ENCODE measurements at regions of chr11 and their contacts with region 1.

Region 1: GRCh38 chr11:6298605-6299004 is 21.7 kb downstream of the CAVIN3 start:
- DNase-seq: peak in 2 of 3 donors; percentile 58 to 66
- ATAC-seq: peak; percentile 65 to 75
- H3K4me3 ChIP-seq: no peak overlapping the region
- H3K27ac ChIP-seq: no peak overlapping the region
- H3K4me1 ChIP-seq: no peaks in the 10 kb centered on the region
- H3K27me3 ChIP-seq: no peaks in the 10 kb centered on the region

Region 2: GRCh38 chr11:5666391-5666770 is 632.2 kb before region 1 on chr11:
- intact Hi-C with region 1: no loop called
- DNase-seq: no peak
- ATAC-seq: no peak
- H3K4me3 ChIP-seq: no peak overlapping the region
- H3K27ac ChIP-seq: no peak overlapping the region
- H3K4me1 ChIP-seq: no peaks in the 10 kb centered on the region
- H3K27me3 ChIP-seq: no peaks in the 10 kb centered on the region

Region 3: GRCh38 chr11:6229911-6230310 is 68.7 kb before region 1 on chr11:
- intact Hi-C with region 1: no loop called
- DNase-seq: no peak
- ATAC-seq: no peak
- H3K4me3 ChIP-seq: no peak overlapping the region
- H3K27ac ChIP-seq: no peak overlapping the region
- H3K4me1 ChIP-seq: peaks cover 2% of the 10 kb centered on the region
- H3K27me3 ChIP-seq: no peaks in the 10 kb centered on the region

Region 4: DNA sequence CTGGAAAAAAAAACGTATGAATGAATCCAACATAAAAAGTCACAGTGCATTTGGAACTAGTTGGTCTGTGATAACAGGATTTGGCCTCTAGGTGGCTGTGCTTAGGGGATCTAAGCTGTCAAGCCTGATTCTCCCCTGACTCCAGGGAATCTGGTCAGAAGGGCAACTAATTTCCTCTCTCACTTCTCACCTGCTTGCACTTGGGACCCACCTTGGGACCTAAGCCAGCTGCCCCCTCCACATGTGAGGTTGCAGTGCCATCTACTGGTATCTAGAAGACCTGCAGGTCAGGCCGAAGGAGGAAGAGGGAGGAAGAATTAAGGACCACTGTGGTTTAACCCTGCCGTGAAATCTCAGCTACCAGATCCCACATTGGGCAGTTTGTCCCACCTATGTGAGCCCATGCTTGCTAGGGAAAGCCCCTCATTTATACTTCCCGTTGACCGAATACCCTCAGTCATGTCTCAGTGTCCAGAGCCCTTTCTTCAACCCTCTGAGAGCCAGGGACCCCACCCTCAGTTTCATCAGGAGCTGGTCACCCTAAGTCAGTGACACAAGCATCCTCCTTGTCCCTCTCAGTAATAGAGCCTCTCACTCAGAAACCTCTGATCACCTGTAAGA is 54.9 kb after region 1 on chr11:
- intact Hi-C with region 1: loop called in 2 of 4 experiments (anchors 10 kb)
- DNase-seq: peak; percentile 35 to 66 (median 57)
- ATAC-seq: peak; percentile 55 to 72
- H3K4me3 ChIP-seq: no peak overlapping the region
- H3K27ac ChIP-seq: no peak overlapping the region
- H3K4me1 ChIP-seq: no peaks in the 10 kb centered on the region
- H3K27me3 ChIP-seq: no peaks in the 10 kb centered on the region

Region 5: DNA sequence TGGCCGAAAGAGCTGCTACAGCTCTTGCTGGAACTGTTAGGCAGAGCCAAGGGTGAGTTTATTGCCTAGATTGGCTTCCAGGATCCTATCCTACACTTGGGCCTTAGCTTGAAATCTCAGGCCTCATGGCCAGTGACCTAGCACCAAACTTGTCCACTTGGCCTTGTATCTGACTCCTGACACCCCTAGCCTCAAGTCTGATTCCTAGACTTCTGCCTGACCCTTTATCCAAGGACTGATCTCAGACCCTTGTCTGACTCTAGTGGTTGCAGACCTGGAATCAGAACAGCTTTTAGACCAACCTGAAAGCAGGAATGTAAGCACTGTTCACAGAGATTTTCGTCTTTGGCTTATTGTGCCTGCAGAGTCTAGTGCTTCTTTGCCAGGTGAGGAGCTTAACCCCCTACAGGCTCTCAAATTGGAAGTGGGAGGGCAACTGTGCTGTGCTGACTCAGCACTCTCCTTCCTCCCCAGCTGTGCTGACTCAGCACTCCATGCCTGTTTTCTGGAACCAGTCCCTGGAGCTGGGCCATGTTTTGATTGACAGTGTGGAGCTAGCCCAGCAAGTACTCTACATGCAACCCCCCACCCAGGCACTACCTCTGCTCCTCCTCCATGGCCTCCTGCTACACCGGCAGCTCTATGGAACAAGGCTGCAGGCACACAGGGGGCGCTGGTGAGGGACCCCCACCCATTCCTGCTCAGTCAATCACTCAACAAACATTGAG is 269.8 kb after region 1 on chr11:
- intact Hi-C with region 1: no loop called
- DNase-seq: peak; percentile 42 to 77 (median 76)
- ATAC-seq: peak; percentile 25 to 40
- H3K4me3 ChIP-seq: no peak overlapping the region
- H3K27ac ChIP-seq: no peak overlapping the region
- H3K4me1 ChIP-seq: peaks cover 5% of the 10 kb centered on the region
- H3K27me3 ChIP-seq: no peaks in the 10 kb centered on the region